Transverse colon (tissue), 4 donors: ENCODE measurements at regions of chr2 and their contacts with region 1.

Region 1: GRCh38 chr2:22301228-22301627 is 1083.8 kb upstream of the KLHL29 start:
- DNase-seq: no peak
- H3K4me3 ChIP-seq: no peak overlapping the region
- H3K27ac ChIP-seq: no peak overlapping the region
- H3K4me1 ChIP-seq: no peaks in the 10 kb centered on the region
- H3K27me3 ChIP-seq: no peaks in the 10 kb centered on the region
- CTCF ChIP-seq: no peak
- EP300 ChIP-seq: no peak
- POLR2A ChIP-seq: no peak

Region 2: DNA sequence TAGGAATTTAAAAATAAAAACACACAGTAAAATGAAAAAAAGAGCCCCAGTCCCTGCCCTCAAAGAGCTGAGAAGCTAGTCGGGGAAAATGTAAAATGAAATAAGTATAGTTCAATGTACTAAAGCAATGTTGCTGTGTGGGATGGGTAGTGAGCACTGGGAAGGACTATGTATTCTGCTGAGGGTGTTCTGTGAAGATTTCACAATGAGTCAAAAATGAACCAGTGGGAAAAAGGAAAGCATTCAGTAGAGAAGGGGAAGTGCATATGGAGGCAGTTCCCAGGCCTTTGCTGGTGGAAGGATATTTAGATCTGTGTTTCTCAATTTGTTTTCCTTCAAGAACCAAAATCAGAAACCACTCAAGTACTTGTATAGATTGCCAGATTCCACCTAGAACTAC is 10.9 kb before region 1 on chr2:
- in situ Hi-C with region 1: no loop called
- intact Hi-C with region 1: loop called (anchors 1 kb)
- DNase-seq: no peak
- H3K4me3 ChIP-seq: no peak overlapping the region
- H3K27ac ChIP-seq: no peak overlapping the region
- H3K4me1 ChIP-seq: no peaks in the 10 kb centered on the region
- H3K27me3 ChIP-seq: no peaks in the 10 kb centered on the region
- CTCF ChIP-seq: no peak
- EP300 ChIP-seq: no peak
- POLR2A ChIP-seq: no peak